ENCODE measurements at regions of chr9 and their contacts with region 1.

Region 1: DNA sequence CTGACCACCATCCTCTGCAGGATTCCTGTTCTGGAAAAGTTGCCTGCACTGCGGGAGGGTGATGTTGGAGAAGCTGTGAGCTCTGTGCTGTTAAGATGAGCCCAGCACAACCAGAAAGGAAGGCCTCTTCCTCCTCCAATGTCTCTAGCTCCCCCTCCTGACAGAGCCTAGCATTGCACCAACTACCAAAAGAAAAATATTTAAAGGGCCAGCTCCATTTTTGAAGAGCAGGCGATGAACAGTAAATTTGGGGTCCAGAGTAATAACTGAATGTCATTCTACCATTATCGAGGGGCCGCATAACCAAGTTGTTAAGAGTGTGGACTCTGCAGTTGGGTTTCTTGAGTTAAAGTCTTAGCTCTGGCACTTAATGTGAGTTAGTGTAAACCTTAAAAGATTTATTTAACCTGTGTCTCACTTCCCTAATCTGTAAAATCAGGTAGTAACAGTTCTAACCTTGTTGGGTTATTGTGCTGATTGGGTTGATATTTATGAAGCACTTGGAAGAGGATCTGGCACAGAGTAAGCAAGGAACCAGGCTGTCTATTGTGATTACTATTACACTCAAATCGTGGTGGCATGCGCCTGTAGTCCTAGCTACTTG is 3.9 kb downstream of the TEX53 start:
- ATAC-seq: peak; percentile 59 to 86 (median 67)
- H3K4me3 ChIP-seq: no peak overlapping the region
- H3K27ac ChIP-seq: no peak overlapping the region
- H3K4me1 ChIP-seq: no peaks in the 10 kb centered on the region

Region 2: GRCh38 chr9:114434878-114435311 is 218.8 kb before region 1 on chr9:
- in situ Hi-C with region 1: loop called in 5 of 9 experiments (anchors 25 kb)
- ATAC-seq: peak; percentile 35 to 89 (median 65)
- H3K4me3 ChIP-seq: no peak overlapping the region
- H3K27ac ChIP-seq: no peak overlapping the region
- H3K4me1 ChIP-seq: no peaks in the 10 kb centered on the region

Region 3: GRCh38 chr9:114532561-114533237 is 121.0 kb before region 1 on chr9:
- in situ Hi-C with region 1: no loop called
- ATAC-seq: no peak
- H3K4me3 ChIP-seq: no peak overlapping the region
- H3K27ac ChIP-seq: no peak overlapping the region
- H3K4me1 ChIP-seq: no peaks in the 10 kb centered on the region

Region 4: GRCh38 chr9:114738581-114739316 is 85.1 kb after region 1 on chr9:
- in situ Hi-C with region 1: no loop called
- ATAC-seq: peak in 6 of 8 experiments; percentile 31 to 92 (median 82)
- H3K4me3 ChIP-seq: no peak overlapping the region
- H3K27ac ChIP-seq: no peak overlapping the region
- H3K4me1 ChIP-seq: no peaks in the 10 kb centered on the region

Region 5: GRCh38 chr9:115182264-115182663 is 528.6 kb after region 1 on chr9:
- in situ Hi-C with region 1: no loop called
- ATAC-seq: no peak
- H3K4me3 ChIP-seq: no peak overlapping the region
- H3K27ac ChIP-seq: no peak overlapping the region
- H3K4me1 ChIP-seq: peaks cover 0 to 2% of the 10 kb centered on the region in 2 donors